Dendritic cell treated with granulocyte-macrophage colony-stimulating factor and Interleukin-4, amounts not matched to agents 40 ng/mL and 50 ng/mL, for 4 days (primary cell): ENCODE measurements at regions of chr9 and their contacts with region 1.

Region 1: DNA sequence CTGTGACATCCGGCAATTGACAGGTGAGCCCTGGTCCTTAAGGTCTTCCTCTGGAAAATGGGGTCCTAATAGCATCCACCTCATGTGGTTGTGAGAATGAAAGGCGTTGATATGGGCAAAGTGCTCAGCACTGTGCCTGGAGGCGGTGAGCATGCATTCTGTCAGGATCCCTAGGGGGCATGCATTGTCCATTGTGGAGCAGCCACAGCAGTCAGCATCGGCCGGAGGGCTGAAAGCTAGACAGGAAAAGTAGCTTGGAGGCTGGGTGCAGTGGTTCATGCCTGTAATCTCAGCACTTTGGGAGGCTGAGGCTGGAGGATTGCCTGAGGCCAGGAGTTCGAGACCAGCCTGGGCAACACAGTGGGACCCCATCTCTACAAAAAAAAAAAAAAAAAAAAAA is 122.2 kb downstream of the LHX2 start:
- H3K4me3 Mint-ChIP-seq: no peak overlapping the region
- H3K27ac Mint-ChIP-seq: no peak overlapping the region
- H3K4me1 Mint-ChIP-seq: peaks cover 45% of the 10 kb centered on the region
- H3K27me3 Mint-ChIP-seq: peaks cover 5% of the 10 kb centered on the region

Region 2: DNA sequence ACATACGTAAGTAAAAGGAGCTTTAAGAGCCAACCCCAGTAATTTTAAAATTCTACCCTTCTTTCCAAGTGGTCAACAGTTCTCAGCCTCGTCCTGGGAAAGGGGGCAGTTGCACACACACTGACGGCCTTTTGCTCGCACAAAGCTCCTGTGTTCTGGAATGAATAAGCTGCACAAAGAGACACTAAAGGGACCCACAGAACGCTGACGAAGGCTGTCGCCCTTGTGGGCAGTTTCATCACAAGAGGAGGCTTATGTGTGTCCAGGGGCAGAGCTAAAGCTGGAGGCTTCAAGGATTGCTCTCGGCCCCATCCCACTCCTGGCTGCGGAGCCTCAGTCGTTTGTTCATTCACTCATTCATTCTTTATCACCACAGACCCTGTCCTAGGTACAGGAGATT is 57.0 kb after region 1 on chr9:
- intact Hi-C with region 1: loop called (anchors 5 kb)
- H3K4me3 Mint-ChIP-seq: no peak overlapping the region
- H3K27ac Mint-ChIP-seq: no peak overlapping the region
- H3K4me1 Mint-ChIP-seq: peaks cover 63% of the 10 kb centered on the region
- H3K27me3 Mint-ChIP-seq: peaks cover 12% of the 10 kb centered on the region

Region 3: DNA sequence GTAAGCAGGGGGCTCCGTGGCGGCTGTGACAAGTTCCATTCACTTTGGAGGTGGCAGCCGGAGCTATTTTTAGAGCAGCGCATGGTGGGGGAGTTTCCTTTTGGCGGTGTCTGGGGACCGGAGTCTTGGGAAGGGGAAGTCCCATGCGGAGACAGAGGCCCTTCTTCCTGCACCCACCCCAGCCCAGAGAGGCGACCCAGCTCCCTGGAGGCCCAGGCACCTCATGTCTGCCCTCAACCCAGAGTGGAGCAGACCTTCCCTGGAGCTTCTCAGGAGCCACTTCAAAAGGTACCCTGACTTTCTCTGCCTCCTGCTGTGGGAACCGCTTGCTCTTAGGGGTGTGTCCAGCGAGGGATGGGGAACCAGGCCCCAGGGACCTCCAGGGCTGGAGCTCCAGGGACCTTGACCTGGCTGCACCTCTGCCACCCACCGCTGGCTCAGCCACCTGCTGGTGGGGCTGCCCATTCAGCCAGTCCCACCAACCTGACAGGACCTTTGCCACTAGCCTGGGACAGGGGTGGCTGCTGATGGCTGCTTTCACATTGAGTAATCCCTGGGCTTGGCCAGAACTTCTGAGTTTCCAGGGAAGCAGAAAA is 158.2 kb after region 1 on chr9:
- intact Hi-C with region 1: loop called (anchors 10 kb)
- H3K4me3 Mint-ChIP-seq: peak overlapping the region; percentile 52
- H3K27ac Mint-ChIP-seq: peak overlapping the region; percentile 66
- H3K4me1 Mint-ChIP-seq: peaks cover 100% of the 10 kb centered on the region
- H3K27me3 Mint-ChIP-seq: no peaks in the 10 kb centered on the region